Panc1 (cell line): ENCODE measurements at regions of chr16 and their contacts with region 1.

Region 1: GRCh38 chr16:70695331-70696070 is 9.6 kb upstream of the MTSS2 start:
- DNase-seq: no peak
- ATAC-seq: peak; percentile 37
- H3K4me3 ChIP-seq: no peak overlapping the region
- H3K27ac ChIP-seq: 0 out of 2 replicates have a peak overlapping the region, but pooled peaks have one; percentile 41
- H3K4me1 ChIP-seq: peaks cover 36% of the 10 kb centered on the region
- H3K27me3 ChIP-seq: no peaks in the 10 kb centered on the region
- CTCF ChIP-seq: no peak

Region 2: DNA sequence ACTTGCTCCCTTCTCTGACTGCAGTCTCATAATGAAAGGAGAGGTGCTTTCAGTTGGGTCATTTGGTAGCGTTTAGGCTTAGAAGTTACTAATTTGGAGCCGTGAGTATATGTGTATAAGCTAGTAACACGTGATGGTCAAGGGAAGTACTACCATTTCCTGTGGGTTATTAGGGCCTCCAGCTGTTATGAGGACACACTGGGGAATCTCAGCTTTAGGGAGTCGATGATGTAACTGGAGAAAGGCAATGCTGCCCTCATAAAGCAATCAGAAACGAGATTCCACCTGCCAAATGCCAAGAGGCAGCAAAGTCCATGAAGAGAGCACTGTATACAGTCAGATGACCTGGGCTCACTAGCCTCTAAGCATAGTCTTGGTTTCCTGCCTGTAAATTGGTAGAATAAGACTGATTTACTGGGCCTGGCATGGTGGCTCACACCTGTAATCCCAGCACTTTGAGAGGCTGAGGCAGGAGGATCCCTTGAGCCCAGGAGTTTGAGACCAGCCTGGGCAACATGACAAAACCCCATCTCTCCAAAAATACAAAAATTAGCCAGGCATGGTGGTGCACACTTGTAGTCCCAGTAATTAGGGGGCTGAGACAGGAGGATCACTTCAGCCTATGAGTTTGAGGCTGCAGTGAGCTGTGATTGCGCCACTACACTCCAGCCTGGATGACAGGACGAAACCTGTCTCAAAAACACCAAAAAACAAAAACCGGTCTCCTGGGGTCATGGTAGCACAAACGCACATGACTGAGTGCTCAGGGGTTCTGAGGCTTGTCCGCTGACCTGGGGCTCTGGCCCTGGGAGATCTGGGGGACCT is 118.9 kb before region 1 on chr16:
- CTCF ChIA-PET with region 1: no interaction called
- POLR2A ChIA-PET with region 1: no interaction called
- in situ Hi-C with region 1: no loop called
- intact Hi-C with region 1: no loop called
- DNase-seq: no peak
- ATAC-seq: peak; percentile 64
- H3K4me3 ChIP-seq: no peak overlapping the region
- H3K27ac ChIP-seq: peak overlapping the region; percentile 54
- H3K4me1 ChIP-seq: peaks cover 21% of the 10 kb centered on the region
- H3K27me3 ChIP-seq: no peaks in the 10 kb centered on the region
- CTCF ChIP-seq: no peak

Region 3: DNA sequence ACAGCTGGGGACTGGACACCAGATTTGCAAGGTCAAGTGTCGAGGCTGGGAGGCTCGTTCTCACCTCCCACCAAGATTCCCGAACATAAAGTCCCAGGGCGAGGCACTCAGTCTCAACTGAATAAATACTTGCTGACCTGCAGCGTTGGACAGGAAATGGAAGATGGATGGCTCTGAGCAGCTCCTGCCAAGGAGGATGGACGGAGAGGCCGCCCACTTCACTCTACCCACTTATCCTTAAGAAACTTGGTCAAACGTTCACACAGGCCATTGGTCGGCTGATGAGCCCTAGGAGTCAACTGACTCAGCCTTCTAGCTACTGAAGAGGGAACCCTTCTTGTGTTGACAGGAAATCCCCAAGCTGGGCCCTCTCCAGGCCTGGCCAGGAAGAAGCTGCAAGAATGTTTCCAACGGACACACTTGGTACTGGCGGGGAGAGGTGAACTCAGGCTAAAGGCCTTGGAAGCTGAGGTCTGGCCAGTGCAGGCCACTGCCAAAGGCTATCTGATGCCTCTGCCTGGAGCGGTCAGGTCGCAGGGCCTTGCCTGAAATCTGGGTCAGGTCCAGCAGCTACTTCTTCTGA is 55.5 kb after region 1 on chr16:
- CTCF ChIA-PET with region 1: no interaction called
- POLR2A ChIA-PET with region 1: no interaction called
- in situ Hi-C with region 1: no loop called
- intact Hi-C with region 1: loop called (anchors 5 kb)
- DNase-seq: no peak
- ATAC-seq: no peak
- H3K4me3 ChIP-seq: no peak overlapping the region
- H3K27ac ChIP-seq: 0 out of 2 replicates have a peak overlapping the region, but pooled peaks have one; percentile 17
- H3K4me1 ChIP-seq: peaks cover 28% of the 10 kb centered on the region
- H3K27me3 ChIP-seq: no peaks in the 10 kb centered on the region
- CTCF ChIP-seq: no peak